ENCODE measurements at regions of chr18 and their contacts with region 1.

Region 1: DNA sequence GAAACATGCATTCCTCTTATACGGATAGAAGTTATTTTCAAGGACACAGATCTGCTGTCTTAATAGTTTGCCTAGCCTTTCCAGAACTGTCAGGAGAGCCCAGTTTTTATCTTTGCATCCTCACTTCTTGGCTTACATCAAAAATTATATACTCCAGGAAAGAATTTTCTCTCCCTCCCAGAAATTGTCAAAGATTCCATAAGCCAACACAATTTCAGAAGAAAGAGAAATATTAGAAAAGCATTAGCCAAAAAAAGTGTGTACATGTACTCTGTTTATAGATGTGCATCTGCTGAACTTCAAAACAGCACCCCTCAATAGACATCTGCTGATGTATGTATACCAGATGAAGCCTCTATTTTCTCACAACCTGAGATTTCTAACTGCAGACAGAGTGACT is 210.4 kb downstream of the METTL4 start:
- DNase-seq: no peak
- H3K4me3 ChIP-seq: no peak overlapping the region
- H3K27ac ChIP-seq: no peak overlapping the region
- H3K4me1 ChIP-seq: no peaks in the 10 kb centered on the region
- CTCF ChIP-seq: no peak

Region 2: GRCh38 chr18:2529154-2529553 is 168.3 kb after region 1 on chr18:
- CTCF ChIA-PET with region 1: no interaction called
- POLR2A ChIA-PET with region 1: no interaction called
- intact Hi-C with region 1: loop called (anchors 2 kb)
- DNase-seq: no peak
- H3K4me3 ChIP-seq: no peak overlapping the region
- H3K27ac ChIP-seq: no peak overlapping the region
- H3K4me1 ChIP-seq: peaks cover 27% of the 10 kb centered on the region
- CTCF ChIP-seq: no peak

Measured in OCI-LY7 (cell line).